Activated CD4-positive, alpha-beta T cell treated with anti-CD3 and anti-CD28 coated beads, Interleukin-2, amount 10 ng/mL, durations not matched to agents 24 days and 14 days (primary cell): ENCODE measurements at regions of chr20 and their contacts with region 1.

Region 1: DNA sequence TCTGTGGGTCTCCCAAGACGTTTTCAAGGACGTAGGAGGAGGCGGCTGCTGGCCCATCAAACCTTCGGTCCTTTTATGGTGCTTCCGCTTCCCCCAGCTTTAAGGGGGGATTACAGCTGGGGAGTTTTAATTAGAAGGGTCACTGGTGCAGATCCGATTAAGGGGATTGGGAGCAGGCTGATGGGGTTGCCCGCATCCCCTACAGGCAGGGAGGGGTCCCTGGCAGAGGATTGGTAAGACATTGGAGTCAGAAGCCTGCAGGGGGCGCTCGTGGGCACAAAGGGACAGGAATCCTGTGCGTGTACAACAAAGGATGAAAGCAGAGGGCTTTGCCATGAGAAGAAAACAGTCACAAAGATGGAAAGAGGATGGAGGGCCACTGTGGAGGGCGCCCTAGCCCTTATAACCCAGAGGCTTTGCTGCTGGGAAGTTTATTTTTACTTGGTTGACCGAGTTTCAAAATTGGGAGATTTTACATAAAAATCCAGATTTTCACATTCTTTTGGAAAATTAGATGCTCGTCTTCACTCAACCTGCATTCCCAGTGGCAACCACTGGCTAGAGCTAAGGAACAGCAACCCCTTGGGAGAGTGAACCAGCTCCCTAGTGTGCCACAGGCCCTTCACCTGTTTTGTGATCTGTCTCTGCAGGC is 97.9 kb downstream of the KCNB1 start:
- DNase-seq: peak; percentile 91
- H3K4me3 Mint-ChIP-seq: no peak overlapping the region
- H3K27ac Mint-ChIP-seq: no peak overlapping the region
- H3K4me1 Mint-ChIP-seq: peaks cover 4% of the 10 kb centered on the region
- H3K27me3 Mint-ChIP-seq: peaks cover 30% of the 10 kb centered on the region

Region 2: GRCh38 chr20:49186535-49187329 is 197.8 kb before region 1 on chr20:
- intact Hi-C with region 1: no loop called
- DNase-seq: peak; percentile 91
- H3K4me3 Mint-ChIP-seq: peak overlapping the region; percentile 95
- H3K27ac Mint-ChIP-seq: peak overlapping the region; percentile 84
- H3K4me1 Mint-ChIP-seq: peaks cover 46% of the 10 kb centered on the region
- H3K27me3 Mint-ChIP-seq: peaks cover 3% of the 10 kb centered on the region

Region 3: GRCh38 chr20:49484180-49485140 is 99.9 kb after region 1 on chr20:
- intact Hi-C with region 1: loop called (anchors 1 kb)
- DNase-seq: peak; percentile 92
- H3K4me3 Mint-ChIP-seq: peak overlapping the region; percentile 86
- H3K27ac Mint-ChIP-seq: no peak overlapping the region
- H3K4me1 Mint-ChIP-seq: peaks cover 9% of the 10 kb centered on the region
- H3K27me3 Mint-ChIP-seq: peaks cover 62% of the 10 kb centered on the region